ENCODE measurements at regions of chr13 and their contacts with region 1.

Region 1: DNA sequence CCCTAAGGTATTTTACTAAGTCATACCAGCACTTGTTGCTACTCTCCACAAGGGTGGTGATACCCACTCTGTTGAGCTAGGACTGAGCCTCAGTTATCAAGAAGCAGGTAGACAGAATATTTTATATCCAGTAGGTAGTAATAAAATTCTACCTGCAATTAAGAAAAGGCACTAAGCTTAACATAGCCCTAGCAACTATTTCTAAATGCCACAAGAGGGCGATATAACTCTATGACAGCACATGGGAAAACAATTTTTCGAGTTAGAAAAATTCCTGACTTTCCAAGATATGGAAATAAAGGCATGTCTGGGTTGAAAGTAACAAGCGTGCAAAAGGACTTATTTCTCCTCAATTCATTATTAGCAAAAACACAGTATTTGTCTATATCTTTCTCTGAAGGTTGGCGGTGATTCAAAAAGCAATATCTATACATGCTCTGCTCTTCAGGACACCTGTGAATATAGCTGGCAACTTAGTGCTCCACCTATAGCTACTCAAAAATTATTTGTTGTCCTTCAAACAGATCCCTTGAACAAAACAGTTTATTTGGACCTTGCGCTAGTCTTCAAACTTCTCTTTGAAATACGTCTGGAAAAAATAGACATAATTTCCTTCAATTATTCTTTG is 14.7 kb downstream of the CCDC169 start:
- DNase-seq: no peak
- H3K4me3 ChIP-seq: no peak overlapping the region
- H3K27me3 ChIP-seq: no peaks in the 10 kb centered on the region
- CTCF ChIP-seq: peak; percentile 74

Region 2: DNA sequence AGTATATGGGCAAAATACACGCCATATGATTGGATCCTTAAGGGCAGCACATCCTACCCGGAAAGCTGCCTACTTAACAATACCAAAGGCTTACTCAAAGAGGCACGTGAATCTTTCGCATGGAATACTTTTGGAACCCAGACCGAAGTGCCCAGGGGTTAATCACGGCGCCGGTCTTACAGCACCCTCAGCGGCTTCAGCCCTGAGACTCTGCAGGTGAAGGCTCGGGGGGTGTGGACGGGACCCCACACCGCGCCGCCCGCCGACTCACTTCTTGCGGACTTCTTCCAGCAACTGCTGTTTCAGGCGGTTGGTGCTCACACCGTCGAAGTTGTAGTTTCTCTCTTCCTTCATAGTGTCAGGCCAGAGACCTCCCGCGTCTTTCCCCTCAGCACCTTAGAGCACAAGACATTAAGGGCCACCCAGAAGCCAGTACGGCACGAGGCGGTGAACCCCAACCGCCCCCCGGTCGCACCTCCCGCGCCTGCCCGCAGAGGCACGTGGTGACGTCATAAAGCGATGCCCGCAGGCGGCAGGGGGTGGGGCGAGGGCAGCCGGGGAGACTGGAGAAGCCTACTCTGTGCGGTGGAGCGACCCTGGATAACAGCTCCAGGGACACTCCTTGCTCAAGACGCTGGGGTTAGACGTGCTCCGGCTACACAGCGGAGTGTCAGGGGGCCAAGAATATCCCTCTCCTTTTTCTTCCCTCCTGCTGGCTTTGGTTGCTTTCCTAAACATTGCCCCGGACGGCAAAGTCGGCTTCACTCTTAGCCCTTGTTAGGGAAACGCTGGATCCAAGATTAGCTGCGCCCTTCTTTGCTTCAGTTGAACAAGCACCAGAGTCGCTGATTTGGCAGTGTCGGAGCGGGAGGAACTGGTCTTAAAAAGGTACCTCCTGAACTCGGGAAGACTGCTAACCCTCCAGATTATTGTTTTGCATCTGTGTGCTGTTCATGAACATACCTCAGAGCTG is 14.7 kb after region 1 on chr13 and contains the start of gene CCDC169:
- CTCF ChIA-PET with region 1: interaction called, 16 read pairs
- POLR2A ChIA-PET with region 1: no interaction called
- DNase-seq: no peak
- H3K4me3 ChIP-seq: peak within 1 kb of the TSS; percentile 61
- H3K27me3 ChIP-seq: no peaks in the 10 kb centered on the region
- CTCF ChIP-seq: no peak
- polyA plus RNA-seq, gene CCDC169: 0.28 and 0.93 TPM in 2 replicates

Region 3: GRCh38 chr13:36395280-36395679 is 112.3 kb after region 1 on chr13:
- CTCF ChIA-PET with region 1: interaction called, 25 read pairs
- POLR2A ChIA-PET with region 1: no interaction called
- DNase-seq: peak; percentile 20
- H3K4me3 ChIP-seq: no peak overlapping the region
- H3K27me3 ChIP-seq: no peaks in the 10 kb centered on the region
- CTCF ChIP-seq: peak; percentile 62